Activated T-helper 1 cell treated with anti-CD3 and anti-CD28 coated beads, Interleukin-12 subunit alpha, Interleukin-12 subunit beta, Interleukin-2, Interleukin-4 antibody, amounts not matched to agents 30 ng/mL and 10 ng/mL and 1 ng/mL, durations not matched to agents 14 hours and 24 hours and 36 hours (primary cell): ENCODE measurements at regions of chr15 and their contacts with region 1.

Region 1: DNA sequence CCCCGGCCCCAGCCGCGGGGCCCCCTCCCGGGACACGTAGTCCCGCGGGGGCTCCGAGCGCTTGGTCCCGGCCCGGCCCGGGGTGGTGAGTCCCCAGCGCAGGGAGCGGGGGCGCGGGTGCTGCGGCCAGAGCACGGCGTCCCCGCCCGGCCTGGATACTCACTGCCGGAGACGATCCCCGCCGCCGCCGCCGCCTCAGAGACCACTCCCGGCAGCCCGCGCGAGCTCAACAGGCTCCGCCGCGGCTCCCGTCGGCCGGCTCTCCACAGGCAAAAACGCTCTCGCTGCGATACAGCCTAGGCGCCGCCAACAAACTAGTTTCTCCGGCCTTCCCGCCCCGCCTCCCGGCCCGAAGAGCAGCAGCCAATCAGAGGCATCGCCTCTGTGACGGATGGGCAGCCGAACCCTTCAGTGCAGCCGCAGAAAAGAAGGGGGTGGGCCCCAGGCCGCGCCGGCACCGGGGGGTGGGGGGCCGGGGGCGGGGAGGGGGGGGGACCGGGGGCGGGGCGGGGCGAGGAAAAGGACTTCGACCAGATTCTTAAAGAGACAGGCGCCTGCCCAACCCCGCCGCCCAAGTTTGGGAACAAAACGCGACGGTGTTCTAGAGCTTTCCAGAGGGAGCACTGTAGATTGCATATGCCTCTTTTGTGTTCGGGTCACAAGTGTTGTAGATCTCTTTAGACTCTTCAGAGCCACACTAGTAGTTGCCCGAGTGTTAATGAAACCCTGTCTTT is at the start of gene KLHL25:
- DNase-seq: peak; percentile 92
- H3K4me3 Mint-ChIP-seq: peak within 1 kb of the TSS; percentile 91
- H3K27ac Mint-ChIP-seq: peak within 1 kb of the TSS; percentile 83
- H3K4me1 Mint-ChIP-seq: peaks cover 31% of the 10 kb centered on the region
- H3K27me3 Mint-ChIP-seq: peaks cover 4% of the 10 kb centered on the region
- total RNA-seq, gene KLHL25: 10.7 and 11.0 TPM in 2 replicates

Region 2: DNA sequence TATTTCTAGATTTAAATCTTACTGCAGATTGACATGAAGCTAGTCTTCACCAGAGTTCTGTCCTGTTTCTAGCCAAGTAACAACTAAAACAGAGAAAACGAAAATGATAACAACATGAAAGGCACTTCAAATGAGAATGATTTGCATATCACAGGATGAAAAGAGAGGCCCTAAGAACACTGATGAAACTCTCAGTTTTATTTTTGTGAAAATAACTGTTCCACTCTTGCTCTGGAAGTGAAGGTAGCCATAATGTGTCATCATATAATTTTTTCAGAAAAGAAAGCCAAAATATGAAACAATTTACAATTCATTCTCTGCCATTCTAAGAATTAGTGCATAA is 1866.4 kb before region 1 on chr15:
- intact Hi-C with region 1: loop called (anchors 10 kb)
- DNase-seq: no peak
- H3K4me3 Mint-ChIP-seq: peak overlapping the region; percentile 1
- H3K27ac Mint-ChIP-seq: peak overlapping the region; percentile 88
- H3K4me1 Mint-ChIP-seq: peaks cover 20% of the 10 kb centered on the region
- H3K27me3 Mint-ChIP-seq: peaks cover 1% of the 10 kb centered on the region

Region 3: DNA sequence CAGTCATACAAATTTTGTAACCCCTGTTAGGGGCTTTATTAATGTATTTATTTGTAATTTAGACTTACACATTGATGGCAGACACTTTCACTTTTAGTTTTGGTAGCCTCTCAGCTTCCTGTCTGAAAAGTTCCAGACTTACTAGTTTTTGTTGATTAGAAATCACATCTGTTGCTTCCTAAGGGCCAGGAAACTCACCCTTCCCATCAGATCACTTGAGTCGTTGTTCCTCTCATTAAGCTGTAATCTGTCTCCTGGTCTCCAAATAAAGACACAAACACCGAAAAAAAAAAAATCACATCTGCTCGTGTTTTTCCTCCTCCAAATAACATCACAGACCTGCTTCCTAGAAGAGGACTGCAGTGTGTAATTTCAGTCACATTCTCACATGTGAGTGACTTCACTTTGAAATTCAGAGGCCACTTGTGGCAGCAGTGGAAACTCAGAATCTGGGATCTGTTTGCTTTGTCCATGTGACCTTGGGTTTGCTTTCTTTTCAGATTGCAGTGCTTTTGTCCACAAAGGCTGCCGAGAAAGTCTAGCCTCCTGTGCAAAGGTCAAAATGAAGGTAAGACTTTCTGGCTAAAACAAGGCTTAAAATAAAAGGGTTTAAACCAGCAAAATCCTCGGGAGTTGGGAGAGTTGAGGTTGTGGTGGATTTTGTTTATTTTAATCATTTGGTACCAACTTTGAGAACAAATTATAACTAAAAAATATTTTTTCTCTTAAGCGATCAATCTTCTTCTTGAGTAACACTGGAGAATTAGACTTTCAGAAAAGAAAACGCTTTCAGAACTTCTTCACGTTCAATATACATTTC is 87.0 kb before region 1 on chr15:
- intact Hi-C with region 1: loop called (anchors 1 kb)
- DNase-seq: no peak
- H3K4me3 Mint-ChIP-seq: peak overlapping the region; percentile 83
- H3K27ac Mint-ChIP-seq: peak overlapping the region; percentile 99
- H3K4me1 Mint-ChIP-seq: peaks cover 88% of the 10 kb centered on the region
- H3K27me3 Mint-ChIP-seq: no peaks in the 10 kb centered on the region

Region 4: GRCh38 chr15:85723960-85724945 is 70.5 kb before region 1 on chr15:
- intact Hi-C with region 1: loop called (anchors 1 kb)
- DNase-seq: no peak
- H3K4me3 Mint-ChIP-seq: peak overlapping the region; percentile 72
- H3K27ac Mint-ChIP-seq: peak overlapping the region; percentile 90
- H3K4me1 Mint-ChIP-seq: peaks cover 47% of the 10 kb centered on the region
- H3K27me3 Mint-ChIP-seq: no peaks in the 10 kb centered on the region

Region 5: GRCh38 chr15:85810075-85810474 is 15.3 kb after region 1 on chr15:
- intact Hi-C with region 1: no loop called
- DNase-seq: no peak
- H3K4me3 Mint-ChIP-seq: no peak overlapping the region
- H3K27ac Mint-ChIP-seq: no peak overlapping the region
- H3K4me1 Mint-ChIP-seq: peaks cover 11% of the 10 kb centered on the region
- H3K27me3 Mint-ChIP-seq: peaks cover 6% of the 10 kb centered on the region